HepG2 (cell line): ENCODE measurements at regions of chr3 and their contacts with region 1.

Region 1: GRCh38 chr3:46078712-46079400 is 51.6 kb upstream of the XCR1 start:
- DNase-seq: peak; percentile 85
- ATAC-seq: peak; percentile 99
- H3K4me3 ChIP-seq: no peak overlapping the region
- H3K27ac ChIP-seq: no peak overlapping the region
- H3K4me1 ChIP-seq: no peaks in the 10 kb centered on the region
- H3K27me3 ChIP-seq: no peaks in the 10 kb centered on the region; a peak in 1 of 5 replicates
- CTCF ChIP-seq: peak; percentile 99
- EP300 ChIP-seq: no peak
- POLR2A ChIP-seq: no peak
- RAD21 ChIP-seq: peak; percentile 94

Region 2: DNA sequence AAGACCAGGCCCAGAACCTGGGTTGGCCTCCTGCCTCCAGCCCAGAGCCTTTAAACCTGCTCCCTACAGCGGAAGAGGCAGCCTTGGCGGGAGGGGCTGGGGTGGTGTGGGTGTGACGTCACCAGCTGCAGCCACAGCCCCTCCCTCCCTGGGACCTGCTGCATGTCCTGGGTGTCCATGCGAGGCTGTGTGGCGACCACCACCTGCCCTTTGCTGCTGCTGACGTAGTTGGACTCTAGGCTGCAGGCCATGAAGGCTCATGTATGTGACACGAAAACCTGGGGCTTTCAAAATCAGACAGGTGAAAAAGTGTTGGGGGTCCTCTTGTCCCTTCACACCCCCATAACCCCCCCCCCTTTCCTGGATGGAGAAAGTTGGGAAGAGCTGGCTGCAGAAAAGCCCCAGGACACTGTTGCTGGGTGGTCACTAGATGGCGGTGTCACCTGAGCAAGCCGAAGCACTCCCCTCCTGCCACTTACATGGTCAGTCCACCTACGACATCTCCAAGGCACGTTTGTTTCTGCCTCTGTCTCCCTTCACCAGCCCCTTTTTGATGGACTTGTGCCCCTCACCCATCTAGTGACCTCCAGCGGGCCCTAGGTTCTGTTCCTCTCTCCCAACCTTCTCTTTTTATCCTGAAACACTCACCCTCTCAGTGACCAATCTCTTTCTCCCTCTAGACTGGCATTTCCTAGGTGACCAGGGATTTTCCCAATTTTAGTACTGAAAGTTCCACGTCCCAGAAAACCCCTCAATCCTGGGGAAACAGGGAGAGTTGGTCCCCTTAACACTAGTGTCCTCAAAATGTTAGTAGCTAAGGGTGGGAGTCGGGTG is 317.8 kb before region 1 on chr3:
- CTCF ChIA-PET with region 1: interaction called, 18 read pairs
- POLR2A ChIA-PET with region 1: no interaction called
- in situ Hi-C with region 1: loop called (anchors 10 kb)
- intact Hi-C with region 1: loop called (anchors 2 kb)
- DNase-seq: peak; percentile 39
- ATAC-seq: peak; percentile 94
- H3K4me3 ChIP-seq: no peak overlapping the region
- H3K27ac ChIP-seq: no peak overlapping the region
- H3K4me1 ChIP-seq: peaks cover 6% of the 10 kb centered on the region; the same call in 1 of the 2 replicates
- H3K27me3 ChIP-seq: peaks cover 2 to 48% of the 10 kb centered on the region in 2 experiments
- CTCF ChIP-seq: peak; percentile 87
- EP300 ChIP-seq: no peak
- POLR2A ChIP-seq: no peak
- RAD21 ChIP-seq: peak; percentile 77

Region 3: DNA sequence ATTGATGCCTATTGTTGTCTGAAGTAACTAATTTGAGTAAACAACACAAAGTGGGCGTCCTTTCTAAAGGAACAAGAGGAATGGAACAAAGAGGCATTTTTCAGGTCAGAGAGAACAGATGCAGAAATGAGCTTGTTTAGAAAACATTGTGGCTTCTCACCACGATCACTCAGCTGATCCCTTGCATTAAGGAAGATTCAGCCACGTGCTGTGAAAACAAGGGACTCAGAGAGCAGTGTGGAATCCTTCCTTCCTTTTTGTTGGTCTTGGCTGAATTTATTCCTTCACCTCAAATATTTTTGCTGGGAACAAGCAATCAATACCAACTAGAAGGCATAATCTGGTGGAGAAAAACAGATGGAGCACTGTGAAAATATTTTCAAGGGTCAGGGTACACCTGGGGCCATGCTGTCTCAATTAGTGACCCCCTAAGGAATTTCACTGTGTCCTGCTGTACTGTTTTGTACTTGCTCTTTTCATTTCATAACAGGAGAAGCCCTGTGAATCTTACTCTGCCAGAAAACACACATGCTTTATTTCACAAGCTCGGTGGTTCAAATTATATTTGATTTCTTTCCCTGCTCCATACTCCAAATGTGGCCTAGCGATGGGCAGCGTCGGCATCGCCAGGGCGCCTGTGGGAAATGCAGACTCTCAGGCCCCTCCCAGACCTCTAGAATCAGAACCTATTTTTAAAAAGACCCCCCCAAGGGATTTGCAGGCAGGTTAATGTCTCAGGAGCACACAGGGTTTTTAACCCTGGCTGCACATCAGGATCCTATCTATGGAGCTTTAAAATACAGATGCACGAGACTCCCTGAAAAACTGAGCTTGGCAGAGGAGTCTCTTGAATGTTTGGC is 270.9 kb before region 1 on chr3:
- CTCF ChIA-PET with region 1: no interaction called
- POLR2A ChIA-PET with region 1: no interaction called
- in situ Hi-C with region 1: no loop called
- intact Hi-C with region 1: no loop called
- DNase-seq: no peak
- ATAC-seq: no peak
- H3K4me3 ChIP-seq: no peak overlapping the region
- H3K27ac ChIP-seq: no peak overlapping the region
- H3K4me1 ChIP-seq: peaks cover 6% of the 10 kb centered on the region; the same call in 1 of the 2 replicates
- H3K27me3 ChIP-seq: no peaks in the 10 kb centered on the region; a peak in 1 of 5 replicates
- CTCF ChIP-seq: no peak
- EP300 ChIP-seq: no peak
- POLR2A ChIP-seq: no peak
- RAD21 ChIP-seq: no peak

Region 4: GRCh38 chr3:45938864-45939263 is 140.0 kb before region 1 on chr3:
- CTCF ChIA-PET with region 1: interaction called, 126 read pairs
- POLR2A ChIA-PET with region 1: no interaction called
- in situ Hi-C with region 1: loop called (anchors 5 kb)
- intact Hi-C with region 1: loop called (anchors 1 kb)
- DNase-seq: peak; percentile 65
- ATAC-seq: peak; percentile 92
- H3K4me3 ChIP-seq: no peak overlapping the region
- H3K27ac ChIP-seq: no peak overlapping the region
- H3K4me1 ChIP-seq: no peaks in the 10 kb centered on the region
- H3K27me3 ChIP-seq: no peaks in the 10 kb centered on the region
- CTCF ChIP-seq: peak; percentile 92
- EP300 ChIP-seq: no peak
- POLR2A ChIP-seq: no peak
- RAD21 ChIP-seq: peak; percentile 68; the same call in 1 of the 2 replicates

Region 5: GRCh38 chr3:46098319-46098761 is 19.5 kb after region 1 on chr3:
- CTCF ChIA-PET with region 1: no interaction called
- POLR2A ChIA-PET with region 1: no interaction called
- in situ Hi-C with region 1: no loop called
- intact Hi-C with region 1: no loop called
- DNase-seq: no peak
- ATAC-seq: no peak
- H3K4me3 ChIP-seq: no peak overlapping the region
- H3K27ac ChIP-seq: no peak overlapping the region
- H3K4me1 ChIP-seq: peaks cover 5% of the 10 kb centered on the region
- H3K27me3 ChIP-seq: no peaks in the 10 kb centered on the region; a peak in 1 of 5 replicates
- CTCF ChIP-seq: no peak
- EP300 ChIP-seq: no peak
- POLR2A ChIP-seq: no peak
- RAD21 ChIP-seq: no peak

Region 6: DNA sequence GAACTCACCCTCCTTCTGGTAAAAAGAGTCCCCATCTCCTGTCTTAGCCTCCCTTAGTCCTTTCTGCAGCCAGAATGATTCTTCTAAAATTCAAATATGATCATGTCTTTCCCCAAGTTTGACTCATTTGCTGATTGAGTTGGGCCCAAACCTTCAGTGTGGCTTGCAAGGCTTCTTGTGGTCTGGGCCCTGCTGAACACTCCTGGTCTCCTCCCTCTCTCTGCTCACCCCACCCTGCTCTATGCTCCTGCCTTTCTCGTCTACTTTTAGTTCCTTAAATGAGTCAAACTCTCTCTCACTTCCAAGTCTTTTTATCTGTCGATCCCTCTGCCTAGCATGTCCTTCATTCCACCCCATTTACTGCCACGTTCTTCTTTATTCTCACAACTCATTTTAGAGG is 56.6 kb after region 1 on chr3:
- CTCF ChIA-PET with region 1: no interaction called
- POLR2A ChIA-PET with region 1: no interaction called
- in situ Hi-C with region 1: no loop called
- intact Hi-C with region 1: no loop called
- DNase-seq: no peak
- ATAC-seq: no peak
- H3K4me3 ChIP-seq: no peak overlapping the region
- H3K27ac ChIP-seq: no peak overlapping the region
- H3K4me1 ChIP-seq: no peaks in the 10 kb centered on the region
- H3K27me3 ChIP-seq: peaks cover 0 to 2% of the 10 kb centered on the region in 2 experiments; a peak in 1 of 5 replicates
- CTCF ChIP-seq: no peak
- EP300 ChIP-seq: no peak
- POLR2A ChIP-seq: no peak
- RAD21 ChIP-seq: no peak

Region 7: GRCh38 chr3:46154311-46154710 is 75.5 kb after region 1 on chr3:
- CTCF ChIA-PET with region 1: no interaction called
- POLR2A ChIA-PET with region 1: no interaction called
- in situ Hi-C with region 1: no loop called
- intact Hi-C with region 1: no loop called
- DNase-seq: no peak
- ATAC-seq: no peak
- H3K4me3 ChIP-seq: no peak overlapping the region
- H3K27ac ChIP-seq: no peak overlapping the region
- H3K4me1 ChIP-seq: no peaks in the 10 kb centered on the region
- H3K27me3 ChIP-seq: no peaks in the 10 kb centered on the region
- CTCF ChIP-seq: no peak
- EP300 ChIP-seq: no peak
- POLR2A ChIP-seq: no peak
- RAD21 ChIP-seq: no peak